Gastrocnemius medialis (tissue), 4 donors: ENCODE measurements at regions of chr3 and their contacts with region 1.

Region 1: GRCh38 chr3:50568947-50569749 is at the start of gene HEMK1:
- DNase-seq: peak; percentile 97
- ATAC-seq: peak; percentile 77 to 78
- H3K4me3 ChIP-seq: peak within 1 kb of the TSS; percentile 81 to 92 (median 86)
- H3K27ac ChIP-seq: peak within 1 kb of the TSS; percentile 88 to 97 (median 92)
- H3K4me1 ChIP-seq: peaks cover 39 to 46% of the 10 kb centered on the region in 2 donors
- H3K27me3 ChIP-seq: no peaks in the 10 kb centered on the region
- CTCF ChIP-seq: peak in 3 of 5 experiments; percentile 11 to 20 (median 11)
- POLR2A ChIP-seq: peak; percentile 73 to 78
- total RNA-seq, gene HEMK1: 4.5 to 8.1 (median 7.5) TPM

Region 2: GRCh38 chr3:50358911-50359759 is 210.0 kb before region 1 on chr3 and contains the start of gene TMEM115:
- in situ Hi-C with region 1: no loop called
- intact Hi-C with region 1: loop called (anchors 5 kb)
- DNase-seq: peak; percentile 99
- ATAC-seq: peak; percentile 97 to 99
- H3K4me3 ChIP-seq: peak within 1 kb of the TSS; percentile 79 to 99 (median 82)
- H3K27ac ChIP-seq: peak within 1 kb of the TSS; percentile 93 to 97 (median 94)
- H3K4me1 ChIP-seq: peaks cover 40 to 43% of the 10 kb centered on the region in 2 donors
- H3K27me3 ChIP-seq: no peaks in the 10 kb centered on the region
- CTCF ChIP-seq: no peak
- POLR2A ChIP-seq: peak; percentile 75 to 79
- total RNA-seq, gene TMEM115: 26.9 to 57.8 (median 42.3) TPM

Region 3: DNA sequence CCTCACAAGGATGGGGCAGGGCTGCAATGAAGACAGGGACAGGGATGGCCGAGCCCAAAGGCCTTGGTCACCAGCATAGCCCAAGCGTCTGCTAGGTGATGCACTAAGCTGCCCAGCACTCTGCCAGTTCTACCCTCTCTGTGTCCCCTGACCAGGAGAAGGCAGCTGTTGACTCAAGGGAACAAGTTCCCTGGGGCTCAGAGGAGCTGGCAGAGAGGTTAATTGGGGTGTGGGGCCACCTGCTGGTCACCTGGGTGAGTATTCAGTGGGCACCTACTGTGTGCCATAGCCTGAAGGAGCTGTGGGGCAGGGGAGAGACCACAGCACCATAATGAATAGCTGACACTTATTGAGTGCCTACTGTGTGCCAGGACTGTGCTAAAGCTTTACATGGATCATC is 83.6 kb after region 1 on chr3:
- in situ Hi-C with region 1: no loop called
- intact Hi-C with region 1: loop called (anchors 2 kb)
- DNase-seq: peak; percentile 33 to 75
- ATAC-seq: peak; percentile 42 to 60
- H3K4me3 ChIP-seq: no peak overlapping the region
- H3K27ac ChIP-seq: peak overlapping the region; percentile 54 to 74 (median 69)
- H3K4me1 ChIP-seq: peaks cover 27 to 32% of the 10 kb centered on the region in 2 donors
- H3K27me3 ChIP-seq: no peaks in the 10 kb centered on the region
- CTCF ChIP-seq: peak; percentile 42 to 83 (median 71)
- POLR2A ChIP-seq: no peak

Region 4: GRCh38 chr3:50674349-50675178 is 105.4 kb after region 1 on chr3 and contains the start of gene DOCK3:
- in situ Hi-C with region 1: no loop called
- intact Hi-C with region 1: loop called (anchors 10 kb)
- DNase-seq: peak in 1 of 2 donors; percentile 41
- ATAC-seq: peak; percentile 84 to 87
- H3K4me3 ChIP-seq: peak within 1 kb of the TSS; percentile 44 to 57 (median 51)
- H3K27ac ChIP-seq: no peak within 1 kb of the TSS
- H3K4me1 ChIP-seq: peaks cover 3 to 4% of the 10 kb centered on the region in 2 donors
- H3K27me3 ChIP-seq: peaks cover 23 to 28% (median 24%) of the 10 kb centered on the region in 3 donors
- CTCF ChIP-seq: no peak
- POLR2A ChIP-seq: peak; percentile 15 to 48
- total RNA-seq, gene DOCK3: 0.61 to 3.1 (median 0.73) TPM